ENCODE measurements at regions of chr11 and their contacts with region 1.

Region 1: DNA sequence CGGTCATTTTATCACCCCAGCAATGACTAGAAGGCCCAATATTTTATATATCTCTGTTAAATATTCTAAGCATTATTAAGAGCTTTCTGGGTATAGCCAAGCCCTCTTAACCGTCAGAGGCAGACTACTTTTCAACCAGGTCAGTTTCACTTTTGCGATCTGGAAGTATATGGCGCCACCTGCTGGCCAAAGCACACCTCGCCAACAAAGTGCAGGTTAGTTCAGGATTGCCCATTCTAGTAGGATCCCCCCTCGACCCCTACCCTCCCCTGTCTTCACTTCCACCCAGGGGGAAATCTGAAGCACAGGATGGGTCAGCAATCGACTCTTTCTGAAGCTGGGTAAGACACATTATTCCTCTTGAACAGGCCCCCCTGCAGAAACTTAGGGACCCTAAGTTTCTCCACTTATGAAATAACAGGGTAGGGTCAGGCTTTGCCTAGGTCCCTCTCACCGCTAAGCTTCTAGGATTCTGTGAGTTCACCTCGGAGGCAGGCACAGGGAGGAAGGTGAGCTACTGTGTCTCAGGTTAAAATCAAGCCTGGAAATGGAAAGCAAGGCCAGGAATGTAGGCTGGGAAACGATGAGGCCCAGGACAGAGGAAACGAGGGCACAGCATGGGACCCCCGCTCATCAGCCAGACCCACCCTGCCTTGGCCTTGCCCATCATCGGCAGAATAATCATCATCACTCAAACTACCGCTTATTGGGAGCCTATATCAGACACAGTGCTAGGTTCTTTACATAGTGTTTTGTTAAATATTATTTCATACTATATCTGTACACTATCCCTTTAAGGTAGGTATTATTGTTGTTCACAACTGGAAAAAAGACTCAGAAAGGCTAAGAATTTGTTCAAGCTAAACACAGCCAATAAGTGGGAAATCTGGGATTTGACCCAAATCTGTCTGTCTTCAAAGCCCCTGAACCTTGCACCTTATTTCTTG is 35.6 kb downstream of the KCNJ1 start:
- DNase-seq: peak; percentile 75
- H3K4me3 Mint-ChIP-seq: peak overlapping the region; percentile 6
- H3K27ac Mint-ChIP-seq: peak overlapping the region; percentile 86
- H3K4me1 Mint-ChIP-seq: peaks cover 18% of the 10 kb centered on the region
- H3K27me3 Mint-ChIP-seq: peaks cover 5% of the 10 kb centered on the region

Region 2: GRCh38 chr11:128026596-128026995 is 804.9 kb before region 1 on chr11:
- intact Hi-C with region 1: loop called (anchors 1 kb)
- DNase-seq: no peak
- H3K4me3 Mint-ChIP-seq: no peak overlapping the region
- H3K27ac Mint-ChIP-seq: no peak overlapping the region
- H3K4me1 Mint-ChIP-seq: peaks cover 11% of the 10 kb centered on the region
- H3K27me3 Mint-ChIP-seq: peaks cover 46% of the 10 kb centered on the region

Region 3: DNA sequence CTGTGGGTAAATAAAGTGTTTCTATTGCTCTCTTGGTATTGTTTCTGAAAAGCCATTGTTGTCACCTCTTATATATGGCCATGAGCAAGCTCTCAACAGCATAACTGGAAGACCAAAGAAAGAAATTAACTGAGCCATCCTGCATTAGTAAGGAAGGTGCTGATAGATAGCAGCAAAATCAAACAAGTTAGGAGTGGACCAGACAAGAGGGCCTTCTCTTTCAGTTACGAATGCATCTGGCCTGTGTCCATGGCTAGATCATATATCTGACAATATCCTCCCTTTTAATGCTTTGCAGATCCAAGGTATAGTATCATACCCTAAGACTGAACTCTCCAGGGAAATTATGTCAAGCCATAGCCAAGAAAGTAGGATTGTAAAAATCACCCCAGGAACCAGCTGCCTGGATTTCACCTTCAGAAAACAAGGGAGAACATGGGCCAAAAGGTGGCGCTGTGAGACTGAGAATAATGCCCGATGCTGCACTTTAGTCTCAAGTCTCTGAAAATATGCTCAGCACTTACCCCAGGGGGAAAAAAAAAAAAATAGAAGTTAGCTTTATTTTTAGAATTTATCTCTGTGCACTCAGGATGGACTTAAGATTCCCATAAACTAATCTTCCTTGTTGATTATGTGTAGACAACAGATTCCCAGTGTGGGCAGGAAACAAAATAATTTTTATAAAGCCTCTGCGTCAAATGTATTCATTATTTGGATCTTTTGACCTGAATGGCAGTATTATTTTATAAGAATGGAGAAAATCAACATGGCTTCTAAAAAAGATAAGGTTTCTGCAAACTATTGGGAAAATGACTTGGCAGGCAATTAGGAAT is 659.2 kb before region 1 on chr11:
- intact Hi-C with region 1: loop called (anchors 1 kb)
- DNase-seq: peak; percentile 72
- H3K4me3 Mint-ChIP-seq: no peak overlapping the region
- H3K27ac Mint-ChIP-seq: peak overlapping the region; percentile 54
- H3K4me1 Mint-ChIP-seq: peaks cover 35% of the 10 kb centered on the region
- H3K27me3 Mint-ChIP-seq: peaks cover 6% of the 10 kb centered on the region

Region 4: DNA sequence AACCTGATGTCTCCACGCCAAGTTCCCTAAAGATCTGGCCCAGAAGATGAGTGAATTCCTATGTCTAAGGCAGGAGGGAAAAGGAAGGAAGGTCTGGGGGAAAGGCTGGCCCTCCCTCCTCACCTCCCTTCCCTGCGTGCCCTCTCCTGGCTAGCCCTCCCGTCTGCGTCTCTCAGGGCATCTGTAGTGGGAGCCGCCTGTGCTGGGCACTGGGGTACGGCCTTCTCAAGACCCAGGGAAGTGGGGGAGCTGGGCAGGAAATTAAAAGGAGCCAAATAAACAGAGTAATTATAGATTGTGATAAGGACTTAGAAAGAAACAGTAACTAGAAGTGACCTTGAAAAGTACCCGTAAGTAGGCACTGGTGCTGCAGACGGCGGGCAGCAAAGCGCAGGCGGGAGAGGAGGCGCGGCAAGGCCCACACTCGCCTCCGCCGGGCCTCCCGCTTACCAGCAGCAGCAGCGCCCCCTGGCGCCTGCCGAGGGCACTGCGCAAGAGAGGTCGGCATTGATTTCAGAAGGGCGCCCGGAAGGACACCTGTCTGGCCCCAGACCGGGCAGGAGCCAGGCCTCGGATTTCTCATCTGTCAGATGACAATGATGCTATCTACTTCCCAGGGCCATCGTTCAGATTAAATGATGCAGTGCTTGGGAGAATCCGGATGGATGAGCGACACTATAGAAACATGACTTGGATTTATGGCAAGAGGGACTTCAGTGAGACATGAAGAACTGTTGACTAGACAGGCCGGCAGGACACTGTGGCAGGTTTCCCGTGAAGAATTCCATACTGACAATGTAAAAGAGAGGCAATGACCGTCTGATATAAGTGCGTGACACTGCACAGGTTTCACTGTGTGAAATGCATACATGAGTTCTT is 28.4 kb after region 1 on chr11:
- intact Hi-C with region 1: no loop called
- DNase-seq: peak; percentile 63
- H3K4me3 Mint-ChIP-seq: no peak overlapping the region
- H3K27ac Mint-ChIP-seq: no peak overlapping the region
- H3K4me1 Mint-ChIP-seq: peaks cover 7% of the 10 kb centered on the region
- H3K27me3 Mint-ChIP-seq: peaks cover 19% of the 10 kb centered on the region